Activated CD4-positive, alpha-beta memory T cell treated with anti-CD3 and anti-CD28 coated beads for 36 hours (primary cell): ENCODE measurements at regions of chr6 and their contacts with region 1.

Region 1: DNA sequence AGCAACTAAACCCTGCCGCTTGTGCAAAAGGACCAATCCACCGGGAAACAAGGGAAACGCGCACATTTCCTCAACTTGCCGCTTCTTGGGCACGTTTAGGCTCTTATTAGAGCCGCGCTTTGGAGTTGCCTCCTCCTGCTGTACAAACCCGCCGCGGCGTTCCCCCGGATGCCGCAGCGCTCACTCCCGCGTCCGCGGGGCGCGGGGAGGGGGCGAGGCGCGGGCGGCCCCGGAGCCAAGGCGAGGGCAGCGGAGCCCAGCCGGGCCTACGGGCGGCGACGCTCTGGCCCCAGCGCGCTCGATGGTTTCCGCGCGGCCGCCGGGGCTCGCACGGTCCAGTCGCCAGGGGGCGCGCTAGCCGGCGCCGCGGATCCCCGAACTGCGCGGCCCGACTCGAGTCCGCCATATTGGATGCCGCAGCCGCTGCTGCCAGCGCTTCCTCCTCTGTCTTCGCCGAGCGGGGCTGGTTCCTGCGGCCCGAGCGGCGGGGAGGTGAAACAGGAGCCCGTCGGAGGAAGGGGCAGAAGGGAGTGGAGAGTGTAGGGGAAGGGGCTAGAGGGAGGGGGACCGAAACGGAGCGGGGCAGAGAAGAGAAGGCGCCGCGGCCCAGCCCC is at the start of gene SCAF8:
- DNase-seq: peak; percentile 86
- H3K4me3 Mint-ChIP-seq: peak within 1 kb of the TSS; percentile 85
- H3K27ac Mint-ChIP-seq: peak within 1 kb of the TSS; percentile 84
- H3K4me1 Mint-ChIP-seq: peaks cover 34% of the 10 kb centered on the region
- H3K27me3 Mint-ChIP-seq: no peaks in the 10 kb centered on the region
- total RNA-seq, gene SCAF8: 30.1 to 31.7 TPM

Region 2: DNA sequence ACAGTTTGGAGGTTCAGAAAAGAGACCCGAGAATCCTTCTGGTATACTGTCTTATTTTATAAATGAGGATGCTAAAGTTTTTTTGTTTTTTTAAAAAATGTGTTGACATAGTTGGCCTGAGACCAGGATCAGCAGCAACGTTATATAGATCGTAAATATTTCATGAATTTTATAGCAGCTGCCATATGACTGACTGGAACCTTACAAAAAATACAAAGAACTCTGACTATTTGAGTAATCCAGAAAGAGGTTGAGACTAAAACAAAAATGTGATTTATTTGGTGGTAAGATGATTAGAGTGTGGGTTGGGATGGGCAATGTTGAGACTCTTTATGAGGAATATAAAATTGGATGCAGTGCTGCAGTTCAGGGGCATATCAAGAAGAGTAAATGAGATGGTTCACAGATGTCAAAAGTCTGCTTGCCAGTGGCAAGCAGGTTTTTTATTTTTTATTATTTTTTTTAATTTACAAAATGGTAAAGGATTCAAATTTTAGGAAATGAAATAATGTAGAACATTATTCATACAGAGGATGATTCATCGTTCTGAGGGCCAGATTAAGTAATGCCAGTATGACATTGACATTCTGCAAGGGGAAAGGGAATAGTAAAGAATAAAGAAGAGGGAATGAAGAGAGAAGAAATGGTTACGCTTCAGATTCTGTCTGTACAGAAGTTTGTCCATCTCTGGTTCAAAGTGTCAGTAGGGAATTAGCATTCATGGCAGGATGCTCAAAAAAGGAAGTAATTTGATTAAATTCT is 58.6 kb after region 1 on chr6:
- CTCF ChIA-PET with region 1: no interaction called
- POLR2A ChIA-PET with region 1: no interaction called
- intact Hi-C with region 1: no loop called
- DNase-seq: no peak
- H3K4me3 Mint-ChIP-seq: no peak overlapping the region
- H3K27ac Mint-ChIP-seq: no peak overlapping the region
- H3K4me1 Mint-ChIP-seq: peaks cover 18% of the 10 kb centered on the region
- H3K27me3 Mint-ChIP-seq: no peaks in the 10 kb centered on the region

Region 3: DNA sequence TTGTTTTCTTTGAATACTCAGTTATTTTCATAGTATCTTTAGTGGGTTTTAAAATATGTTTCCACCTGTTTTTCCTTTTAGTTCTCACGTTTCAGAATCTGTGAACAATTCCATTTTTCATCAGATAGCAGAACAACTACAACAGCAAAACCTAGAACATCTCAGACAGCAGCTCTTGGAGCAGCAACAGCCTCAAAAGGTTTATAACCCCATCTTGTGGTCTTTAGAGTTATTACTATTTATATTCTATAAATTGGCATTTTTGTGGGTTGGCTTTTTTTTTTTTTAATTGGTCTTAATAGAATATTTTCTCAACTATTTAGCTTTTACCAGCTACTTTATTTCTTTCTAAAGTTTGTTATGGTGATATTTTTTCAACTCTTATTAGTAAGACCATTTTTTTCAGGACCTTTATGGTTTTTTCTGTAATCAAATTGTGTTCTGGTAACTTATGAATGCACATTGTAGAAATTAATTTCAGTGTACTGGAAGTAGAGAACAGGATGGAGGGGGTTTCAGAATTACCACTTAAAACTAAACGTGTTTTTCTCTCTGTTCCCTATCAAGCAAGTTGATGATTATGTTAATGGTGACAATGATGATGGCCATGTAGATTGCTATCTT is 72.3 kb after region 1 on chr6:
- CTCF ChIA-PET with region 1: interaction called, 7 read pairs
- POLR2A ChIA-PET with region 1: no interaction called
- intact Hi-C with region 1: loop called (anchors 1 kb)
- DNase-seq: no peak
- H3K4me3 Mint-ChIP-seq: no peak overlapping the region
- H3K27ac Mint-ChIP-seq: no peak overlapping the region
- H3K4me1 Mint-ChIP-seq: peaks cover 3% of the 10 kb centered on the region
- H3K27me3 Mint-ChIP-seq: no peaks in the 10 kb centered on the region